ENCODE measurements at regions of chr15 and their contacts with region 1.

Region 1: DNA sequence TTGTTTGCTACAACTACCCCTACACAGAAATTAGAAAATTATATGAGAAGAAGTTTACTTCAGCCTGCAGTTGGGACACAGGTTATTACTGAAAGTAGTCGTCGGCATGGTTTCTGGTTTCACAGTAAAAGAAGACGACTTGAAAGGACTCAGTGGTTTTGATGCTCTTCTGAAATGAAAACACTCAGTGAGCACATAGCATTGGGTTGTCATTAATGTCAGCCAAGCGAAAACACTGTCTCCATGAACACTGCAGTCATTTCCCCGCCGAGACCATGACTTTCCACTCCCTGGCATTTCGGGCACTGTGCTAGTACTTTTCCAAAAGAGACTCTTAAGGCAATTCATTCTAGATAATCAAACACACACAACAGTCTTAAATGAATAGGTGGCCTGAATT is 69.2 kb upstream of the ICE2 start:
- DNase-seq: peak; percentile 85
- ATAC-seq: peak; percentile 86
- H3K4me3 ChIP-seq: peak overlapping the region; percentile 11; the same call in 1 of the 2 replicates
- H3K27ac ChIP-seq: peak overlapping the region; percentile 66
- H3K4me1 ChIP-seq: peaks cover 49% of the 10 kb centered on the region
- H3K27me3 ChIP-seq: no peaks in the 10 kb centered on the region
- CTCF ChIP-seq: no peak
- EP300 ChIP-seq: peak; percentile 66 to 76
- POLR2A ChIP-seq: no peak
- RAD21 ChIP-seq: peak; percentile 10; the same call in 1 of the 2 replicates

Region 2: GRCh38 chr15:60535743-60536142 is 12.4 kb before region 1 on chr15:
- CTCF ChIA-PET with region 1: interaction called, 19 read pairs
- POLR2A ChIA-PET with region 1: interaction called, 7 read pairs
- RAD21 ChIA-PET with region 1: interaction called, 9 read pairs
- SMC1A ChIA-PET with region 1: interaction called, 44 read pairs
- in situ Hi-C with region 1: no loop called
- intact Hi-C with region 1: no loop called
- DNase-seq: no peak
- ATAC-seq: no peak
- H3K4me3 ChIP-seq: no peak overlapping the region
- H3K27ac ChIP-seq: no peak overlapping the region
- H3K4me1 ChIP-seq: 0 out of 2 replicates have a peak, but pooled peaks cover 3% of the 10 kb centered on the region
- H3K27me3 ChIP-seq: no peaks in the 10 kb centered on the region
- CTCF ChIP-seq: no peak
- EP300 ChIP-seq: no peak
- POLR2A ChIP-seq: no peak
- RAD21 ChIP-seq: no peak

Region 3: DNA sequence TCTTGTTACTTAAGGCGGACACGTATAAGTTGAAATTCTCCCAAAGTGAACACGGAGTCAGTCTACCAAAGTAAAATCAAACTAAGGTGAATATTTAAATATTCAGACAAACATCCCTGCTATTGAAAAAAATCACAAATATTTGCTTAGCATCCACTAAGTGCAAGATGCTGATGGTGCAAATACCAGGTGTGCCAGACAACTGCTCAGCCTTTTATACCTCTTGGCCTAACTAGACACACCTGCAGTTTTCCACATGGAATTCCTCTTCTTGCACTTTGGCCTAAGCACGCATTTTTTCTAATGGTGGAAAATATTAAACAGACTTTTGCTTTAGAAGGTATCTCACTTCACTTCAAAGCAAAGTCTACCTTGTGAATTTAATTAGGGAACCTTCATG is 15.0 kb after region 1 on chr15:
- CTCF ChIA-PET with region 1: interaction called, 55 read pairs
- POLR2A ChIA-PET with region 1: interaction called, 16 read pairs
- RAD21 ChIA-PET with region 1: interaction called, 47 read pairs
- SMC1A ChIA-PET with region 1: interaction called, 95 read pairs
- in situ Hi-C with region 1: no loop called
- intact Hi-C with region 1: no loop called
- DNase-seq: no peak
- ATAC-seq: no peak
- H3K4me3 ChIP-seq: no peak overlapping the region
- H3K27ac ChIP-seq: peak overlapping the region; percentile 90
- H3K4me1 ChIP-seq: peaks cover 44% of the 10 kb centered on the region
- H3K27me3 ChIP-seq: no peaks in the 10 kb centered on the region
- CTCF ChIP-seq: no peak
- EP300 ChIP-seq: no peak
- POLR2A ChIP-seq: no peak
- RAD21 ChIP-seq: no peak

Region 4: DNA sequence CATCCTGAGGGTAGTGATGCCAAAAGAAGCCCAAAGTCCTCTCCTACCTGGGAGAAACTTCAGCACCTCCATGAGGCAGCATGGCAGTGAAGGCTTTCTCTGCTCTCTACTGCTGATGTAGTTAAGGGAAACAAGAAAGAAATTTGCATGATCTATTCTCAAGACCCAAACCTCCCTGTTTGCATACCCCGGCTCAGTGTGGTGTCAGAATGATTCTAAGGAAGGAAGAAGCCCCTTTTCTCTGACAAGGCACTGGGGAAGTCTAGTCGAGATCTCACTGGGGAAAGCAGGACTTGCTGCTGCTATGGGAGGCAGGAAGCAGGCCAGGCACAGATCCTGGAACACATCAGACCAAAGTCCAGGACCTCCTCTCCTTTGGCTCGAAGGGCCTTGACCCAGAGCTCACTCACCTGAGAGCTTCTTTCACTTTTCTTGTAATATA is 20.2 kb after region 1 on chr15:
- CTCF ChIA-PET with region 1: interaction called, 55 read pairs
- POLR2A ChIA-PET with region 1: interaction called, 16 read pairs
- RAD21 ChIA-PET with region 1: interaction called, 47 read pairs
- SMC1A ChIA-PET with region 1: interaction called, 95 read pairs
- in situ Hi-C with region 1: no loop called
- intact Hi-C with region 1: no loop called
- DNase-seq: peak; percentile 87
- ATAC-seq: peak; percentile 79
- H3K4me3 ChIP-seq: peak overlapping the region; percentile 26
- H3K27ac ChIP-seq: peak overlapping the region; percentile 93
- H3K4me1 ChIP-seq: peaks cover 75% of the 10 kb centered on the region
- H3K27me3 ChIP-seq: no peaks in the 10 kb centered on the region
- CTCF ChIP-seq: no peak
- EP300 ChIP-seq: peak in 1 of 2 experiments; percentile 61; a peak in 2 of 4 replicates
- POLR2A ChIP-seq: peak; percentile 79
- RAD21 ChIP-seq: no peak

Region 5: GRCh38 chr15:60573936-60574335 is 25.8 kb after region 1 on chr15:
- CTCF ChIA-PET with region 1: interaction called, 43 read pairs
- POLR2A ChIA-PET with region 1: interaction called, 5 read pairs
- RAD21 ChIA-PET with region 1: interaction called, 17 read pairs
- SMC1A ChIA-PET with region 1: interaction called, 113 read pairs
- in situ Hi-C with region 1: no loop called
- intact Hi-C with region 1: no loop called
- DNase-seq: no peak
- ATAC-seq: peak; percentile 82
- H3K4me3 ChIP-seq: peak overlapping the region; percentile 56; the same call in 1 of the 2 replicates
- H3K27ac ChIP-seq: peak overlapping the region; percentile 84
- H3K4me1 ChIP-seq: peaks cover 71% of the 10 kb centered on the region
- H3K27me3 ChIP-seq: no peaks in the 10 kb centered on the region
- CTCF ChIP-seq: no peak
- EP300 ChIP-seq: peak in 1 of 2 experiments; percentile 57; a peak in 1 of 4 replicates
- POLR2A ChIP-seq: peak; percentile 50; the same call in 1 of the 2 replicates
- RAD21 ChIP-seq: no peak

Region 6: GRCh38 chr15:60580650-60581376 is 32.7 kb after region 1 on chr15:
- CTCF ChIA-PET with region 1: interaction called, 44 read pairs
- POLR2A ChIA-PET with region 1: interaction called, 5 read pairs
- RAD21 ChIA-PET with region 1: interaction called, 39 read pairs
- SMC1A ChIA-PET with region 1: interaction called, 113 read pairs
- in situ Hi-C with region 1: no loop called
- intact Hi-C with region 1: loop called (anchors 2 kb)
- DNase-seq: no peak
- ATAC-seq: peak; percentile 36
- H3K4me3 ChIP-seq: peak overlapping the region; percentile 41; the same call in 1 of the 2 replicates
- H3K27ac ChIP-seq: peak overlapping the region; percentile 94
- H3K4me1 ChIP-seq: peaks cover 64% of the 10 kb centered on the region
- H3K27me3 ChIP-seq: no peaks in the 10 kb centered on the region
- CTCF ChIP-seq: no peak
- EP300 ChIP-seq: no peak
- POLR2A ChIP-seq: no peak
- RAD21 ChIP-seq: no peak

Region 7: DNA sequence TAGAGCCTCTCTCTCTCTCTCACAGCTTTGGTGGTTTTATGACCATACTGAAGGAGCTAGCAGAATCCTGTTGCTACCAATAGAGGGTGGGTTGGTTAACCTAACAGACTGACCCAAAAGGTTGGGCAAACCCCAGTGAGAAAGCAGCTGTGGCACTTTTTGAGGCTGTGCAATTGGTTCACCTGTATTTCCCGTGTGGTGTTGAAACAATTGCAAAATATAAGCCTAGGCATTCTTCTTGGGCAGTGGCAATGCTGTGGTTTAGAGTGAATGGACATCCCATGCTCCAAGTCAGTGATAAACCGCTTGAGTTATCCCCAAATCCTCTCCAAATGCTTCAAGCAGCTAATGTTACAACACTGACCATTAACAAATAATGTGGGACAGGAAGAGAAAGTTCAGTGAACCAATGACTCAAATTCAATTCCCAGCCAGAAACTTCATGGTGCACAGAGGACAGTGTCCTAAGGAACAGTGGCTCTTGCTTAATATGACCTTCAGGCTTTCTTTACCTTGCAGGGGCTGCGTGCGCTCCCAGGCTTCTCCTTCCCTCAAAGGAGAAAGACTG is 192.8 kb after region 1 on chr15:
- CTCF ChIA-PET with region 1: no interaction called
- POLR2A ChIA-PET with region 1: no interaction called
- RAD21 ChIA-PET with region 1: no interaction called
- SMC1A ChIA-PET with region 1: no interaction called
- in situ Hi-C with region 1: no loop called
- intact Hi-C with region 1: no loop called
- DNase-seq: no peak
- ATAC-seq: no peak; the same call in 2 of the 3 replicates
- H3K4me3 ChIP-seq: no peak overlapping the region
- H3K27ac ChIP-seq: no peak overlapping the region
- H3K4me1 ChIP-seq: no peaks in the 10 kb centered on the region
- H3K27me3 ChIP-seq: no peaks in the 10 kb centered on the region
- CTCF ChIP-seq: no peak
- EP300 ChIP-seq: no peak
- POLR2A ChIP-seq: no peak
- RAD21 ChIP-seq: no peak

Region 8: GRCh38 chr15:61051569-61052031 is 503.5 kb after region 1 on chr15:
- CTCF ChIA-PET with region 1: no interaction called
- POLR2A ChIA-PET with region 1: no interaction called
- RAD21 ChIA-PET with region 1: no interaction called
- SMC1A ChIA-PET with region 1: no interaction called
- in situ Hi-C with region 1: no loop called
- intact Hi-C with region 1: no loop called
- DNase-seq: no peak
- ATAC-seq: peak; percentile 38
- H3K4me3 ChIP-seq: no peak overlapping the region
- H3K27ac ChIP-seq: no peak overlapping the region
- H3K4me1 ChIP-seq: no peaks in the 10 kb centered on the region; the same call in 1 of the 2 replicates
- H3K27me3 ChIP-seq: no peaks in the 10 kb centered on the region; a peak in 1 of 4 replicates
- CTCF ChIP-seq: peak; percentile 23 to 36 (median 26); a peak in 4 of 6 replicates
- EP300 ChIP-seq: no peak
- POLR2A ChIP-seq: no peak
- RAD21 ChIP-seq: peak; percentile 32; the same call in 1 of the 2 replicates

Region 9: DNA sequence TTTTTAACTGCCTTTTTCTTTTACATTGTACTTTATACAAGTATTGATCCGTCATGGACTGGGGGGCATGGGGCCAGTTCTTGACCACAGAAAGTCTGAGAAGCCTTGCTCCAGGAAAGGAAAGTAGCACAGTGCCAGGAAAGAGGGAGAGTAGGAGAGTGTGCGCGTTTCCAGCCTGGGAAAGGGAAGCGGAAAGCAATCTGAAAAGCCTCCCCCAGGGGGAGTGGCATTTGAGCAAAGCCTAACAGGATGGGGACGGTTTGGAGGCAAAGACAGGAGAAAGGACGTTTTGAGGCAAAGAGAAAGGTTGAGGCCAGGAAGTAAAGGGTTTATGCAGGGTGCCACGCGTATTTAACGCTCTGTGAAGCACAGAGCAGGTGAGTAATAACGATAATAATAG is 564.1 kb after region 1 on chr15:
- CTCF ChIA-PET with region 1: no interaction called
- POLR2A ChIA-PET with region 1: no interaction called
- RAD21 ChIA-PET with region 1: no interaction called
- SMC1A ChIA-PET with region 1: no interaction called
- in situ Hi-C with region 1: no loop called
- intact Hi-C with region 1: no loop called
- DNase-seq: no peak
- ATAC-seq: no peak
- H3K4me3 ChIP-seq: no peak overlapping the region
- H3K27ac ChIP-seq: no peak overlapping the region
- H3K4me1 ChIP-seq: peaks cover 3% of the 10 kb centered on the region; the same call in 1 of the 2 replicates
- H3K27me3 ChIP-seq: peaks cover 0 to 4% of the 10 kb centered on the region in 2 experiments; a peak in 3 of 4 replicates
- CTCF ChIP-seq: no peak
- EP300 ChIP-seq: no peak
- POLR2A ChIP-seq: no peak
- RAD21 ChIP-seq: no peak

Measured in GM12878 (cell line).